ENCODE measurements at regions of chr1 and their contacts with region 1.

Region 1: DNA sequence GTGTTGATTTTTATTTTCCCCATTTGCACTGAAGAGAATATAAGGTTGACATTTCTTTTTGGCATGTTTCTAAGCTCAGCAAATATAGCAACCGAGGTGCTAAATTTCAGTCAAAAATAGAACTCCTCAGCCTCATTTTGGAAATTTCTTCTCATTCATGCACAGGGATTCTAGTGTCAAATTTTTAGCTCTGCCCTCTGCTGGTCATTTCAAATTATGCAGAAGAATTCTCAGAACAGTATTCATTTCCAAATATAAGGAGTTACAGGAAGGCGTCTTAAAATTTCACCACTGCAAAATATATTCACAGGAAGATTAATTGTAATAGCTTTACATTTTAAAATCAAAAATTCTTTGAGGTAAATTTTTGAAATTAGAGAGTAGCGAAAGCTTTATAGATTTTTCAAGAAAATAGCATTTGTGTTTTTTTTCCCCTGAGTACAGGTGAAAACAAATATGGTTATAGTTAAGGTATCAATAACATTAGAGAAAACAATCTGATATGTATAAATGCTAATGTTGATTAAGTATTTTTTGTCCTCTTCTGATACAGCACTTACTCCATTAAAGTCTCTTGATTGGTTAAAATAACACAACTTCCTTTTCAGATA is 57.9 kb downstream of the FMN2 start:
- DNase-seq: no peak
- ATAC-seq: no peak
- H3K4me3 ChIP-seq: no peak overlapping the region
- H3K27ac ChIP-seq: no peak overlapping the region
- H3K4me1 ChIP-seq: no peaks in the 10 kb centered on the region
- H3K27me3 ChIP-seq: no peaks in the 10 kb centered on the region

Region 2: DNA sequence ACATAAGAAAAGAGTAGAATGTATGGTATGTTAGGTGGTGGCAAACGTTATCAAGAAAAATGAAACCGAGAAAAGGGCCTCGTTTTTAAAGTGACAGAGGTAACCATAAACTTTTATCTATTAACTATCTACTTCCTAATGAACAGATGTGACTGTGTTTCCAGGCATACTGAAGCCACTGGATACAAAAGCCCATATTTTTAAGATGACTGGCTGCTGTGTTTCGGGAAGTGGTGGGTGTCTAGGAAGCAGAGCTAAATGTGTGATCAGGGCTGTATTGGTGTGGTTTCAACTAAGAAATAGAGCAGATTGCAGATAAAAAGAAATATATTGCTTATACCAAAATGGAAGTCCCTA is 691.5 kb before region 1 on chr1:
- intact Hi-C with region 1: no loop called
- DNase-seq: no peak
- ATAC-seq: no peak
- H3K4me3 ChIP-seq: no peak overlapping the region
- H3K27ac ChIP-seq: no peak overlapping the region
- H3K4me1 ChIP-seq: no peaks in the 10 kb centered on the region
- H3K27me3 ChIP-seq: no peaks in the 10 kb centered on the region

Region 3: DNA sequence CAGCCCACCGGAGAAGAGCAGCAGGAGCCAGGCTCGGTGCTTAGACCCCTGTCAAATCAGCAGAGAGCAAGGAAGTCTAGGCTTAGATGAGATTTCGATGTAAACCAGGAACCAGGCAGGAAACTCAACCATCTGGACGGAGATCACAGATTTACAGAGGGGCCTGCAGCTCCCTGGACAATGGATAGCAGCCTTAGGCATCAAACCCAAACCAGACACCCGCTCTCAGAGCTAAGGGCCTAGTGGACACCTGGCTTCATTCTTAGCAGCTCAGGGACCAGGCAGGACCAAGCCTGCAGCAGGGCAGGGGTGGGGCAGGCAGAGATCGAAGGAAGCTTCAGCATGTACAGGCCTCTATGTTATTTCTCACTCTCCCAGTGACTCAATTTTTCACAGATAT is 185.7 kb before region 1 on chr1:
- intact Hi-C with region 1: no loop called
- DNase-seq: no peak
- ATAC-seq: no peak
- H3K4me3 ChIP-seq: no peak overlapping the region
- H3K27ac ChIP-seq: no peak overlapping the region
- H3K4me1 ChIP-seq: no peaks in the 10 kb centered on the region
- H3K27me3 ChIP-seq: no peaks in the 10 kb centered on the region

Region 4: GRCh38 chr1:240027059-240027462 is 122.5 kb before region 1 on chr1:
- intact Hi-C with region 1: loop called in 1 of 2 experiments (anchors 5 kb)
- DNase-seq: no peak
- ATAC-seq: no peak
- H3K4me3 ChIP-seq: no peak overlapping the region
- H3K27ac ChIP-seq: no peak overlapping the region
- H3K4me1 ChIP-seq: no peaks in the 10 kb centered on the region
- H3K27me3 ChIP-seq: no peaks in the 10 kb centered on the region

Measured in aorta (tissue), 5 donors.